Right ventricle myocardium inferior (tissue), 1 donor: ENCODE measurements at regions of chr5 and their contacts with region 1.

Region 1: GRCh38 chr5:10283927-10284635 is 23.6 kb downstream of the CMBL start:
- DNase-seq: peak; percentile 92
- ATAC-seq: peak; percentile 83

Region 2: GRCh38 chr5:10133830-10134229 is 150.3 kb before region 1 on chr5:
- intact Hi-C with region 1: no loop called
- DNase-seq: no peak
- ATAC-seq: no peak

Region 3: GRCh38 chr5:10317825-10318682 is 34.0 kb after region 1 on chr5:
- intact Hi-C with region 1: no loop called
- DNase-seq: no peak
- ATAC-seq: no peak

Region 4: GRCh38 chr5:10353241-10354047 is 69.4 kb after region 1 on chr5 and contains the start of gene MARCHF6:
- intact Hi-C with region 1: loop called (anchors 5 kb)
- DNase-seq: peak; percentile 98
- ATAC-seq: peak; percentile 96
- total RNA-seq, gene MARCHF6: 161 TPM

Region 5: DNA sequence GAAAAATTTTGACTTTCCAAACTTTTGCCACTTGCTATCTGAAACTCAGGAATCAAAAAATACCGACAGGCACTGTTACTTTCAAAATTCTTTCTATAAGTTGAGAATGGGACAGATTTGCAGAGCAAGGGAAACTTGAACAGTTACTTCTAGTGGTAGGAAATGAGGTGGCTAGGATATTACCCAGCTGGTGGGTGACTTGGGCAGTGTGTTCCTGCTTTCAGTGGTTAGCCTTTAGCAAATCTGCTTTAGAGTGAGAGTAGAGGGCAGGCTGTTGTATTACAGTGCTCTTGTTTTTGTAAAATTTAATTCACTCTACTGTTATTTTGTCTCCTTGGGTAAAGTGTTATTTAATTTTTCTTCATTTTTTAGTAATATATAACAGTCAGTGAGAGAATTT is 117.4 kb after region 1 on chr5:
- intact Hi-C with region 1: loop called (anchors 5 kb)
- DNase-seq: no peak
- ATAC-seq: no peak

Region 6: DNA sequence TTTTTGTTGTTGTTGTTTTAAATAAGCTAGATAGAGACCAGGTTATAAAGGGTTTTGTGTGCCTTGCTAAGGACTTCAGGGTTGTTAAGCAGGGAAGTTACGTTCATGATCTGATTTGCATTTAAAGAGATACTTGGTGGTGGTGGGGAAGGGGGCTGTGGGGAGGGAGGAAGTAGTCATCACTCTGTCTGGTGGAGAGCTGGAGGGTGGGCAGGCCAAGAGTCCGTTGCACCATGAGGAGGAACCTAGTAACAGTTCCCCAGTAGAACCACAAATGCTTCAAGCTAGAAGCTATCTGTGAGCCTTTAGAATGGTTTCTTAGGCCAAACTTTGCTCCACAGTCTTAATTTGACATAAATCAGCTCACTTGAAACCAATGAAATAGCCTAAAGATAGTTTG is 138.9 kb after region 1 on chr5:
- intact Hi-C with region 1: loop called (anchors 1 kb)
- DNase-seq: no peak
- ATAC-seq: no peak